Cardiac septum (tissue), 1 donor: ENCODE measurements at regions of chr17 and their contacts with region 1.

Region 1: DNA sequence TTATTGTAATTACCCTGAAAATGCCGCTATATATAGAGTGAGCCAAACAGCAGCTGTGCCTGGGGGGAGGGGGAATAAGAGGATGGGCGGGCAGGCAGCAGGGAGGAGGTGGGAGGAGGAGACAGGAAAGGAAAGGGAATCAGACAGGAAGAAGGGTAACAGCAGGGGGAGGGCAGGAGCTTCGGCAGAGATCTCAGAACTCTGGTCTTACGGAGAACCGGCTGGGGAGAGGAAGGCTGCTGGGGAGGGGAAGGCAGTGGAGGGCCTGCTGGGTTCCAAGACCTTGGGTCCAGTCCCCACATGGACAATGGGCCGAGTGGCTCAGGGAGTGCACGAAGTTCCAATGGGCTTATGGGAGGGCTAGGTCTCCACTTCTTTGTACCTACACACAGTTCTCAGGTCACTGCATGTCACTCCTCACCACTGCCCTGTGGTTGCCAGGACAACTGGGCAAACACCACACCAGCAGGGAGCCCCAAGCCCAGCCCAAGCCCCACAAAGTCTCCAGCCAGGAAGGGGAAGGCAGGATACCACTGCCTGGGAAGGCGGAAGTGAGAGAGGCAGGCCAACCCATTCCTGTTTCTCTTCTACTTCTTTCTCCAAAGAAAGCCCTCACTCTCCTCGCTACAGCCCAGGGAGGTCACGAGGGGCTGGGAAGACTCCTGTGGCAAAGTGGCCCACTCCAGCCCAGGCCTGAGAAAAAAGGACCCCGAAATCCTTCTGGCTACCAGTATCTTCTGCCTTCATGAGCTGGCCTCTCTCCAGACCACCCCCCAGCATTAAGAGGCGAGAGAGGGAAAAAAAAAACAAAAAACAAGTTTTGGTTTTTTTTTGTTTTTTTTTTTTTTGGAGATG is 25.3 kb downstream of the G6PC3 start:
- DNase-seq: peak; percentile 84

Region 2: GRCh38 chr17:43891851-43892646 is 203.8 kb before region 1 on chr17:
- intact Hi-C with region 1: no loop called
- DNase-seq: no peak

Region 3: DNA sequence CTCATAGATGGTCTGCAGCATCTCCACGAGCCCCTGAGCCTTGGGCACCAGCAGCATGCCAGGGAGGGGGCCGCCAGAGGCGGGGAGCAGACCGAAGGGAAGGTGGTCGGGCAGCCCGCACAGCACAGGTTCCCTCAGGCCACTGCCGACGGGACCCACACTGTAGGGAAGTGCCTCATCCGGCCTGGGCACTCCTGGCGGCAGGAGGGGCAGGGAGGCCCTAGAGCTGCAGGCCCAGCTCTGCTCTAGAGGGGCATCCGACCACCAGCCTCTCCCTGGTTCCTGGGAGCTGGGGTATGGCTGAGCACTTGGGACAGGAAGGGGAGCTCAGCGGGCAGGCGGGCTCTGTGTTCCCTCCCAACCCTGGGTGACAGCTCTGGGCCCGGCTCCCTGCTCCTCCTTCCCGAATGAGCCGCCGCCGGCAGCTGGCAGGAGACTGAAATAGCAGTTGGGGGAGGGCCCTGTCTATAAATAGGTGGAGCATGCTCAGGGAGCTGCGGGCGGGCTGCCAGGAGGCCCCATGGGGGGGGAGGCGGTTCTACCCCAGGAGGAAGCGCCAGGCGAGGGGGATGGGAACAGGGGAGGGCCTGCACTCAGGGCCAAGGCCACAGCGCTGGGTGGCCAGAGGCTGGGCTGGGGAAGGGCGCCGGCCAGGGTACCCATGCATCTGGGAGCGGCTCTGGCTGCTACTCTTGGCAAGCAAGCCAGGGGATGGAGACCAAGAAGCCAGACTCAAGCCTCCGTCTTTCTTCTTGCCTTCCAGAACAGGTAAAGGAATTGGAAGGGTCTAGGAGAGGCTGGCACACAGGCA is 15.2 kb after region 1 on chr17:
- intact Hi-C with region 1: loop called (anchors 1 kb)
- DNase-seq: peak; percentile 98